HCT116 (cell line): ENCODE measurements at regions of chr12 and their contacts with region 1.

Region 1: GRCh38 chr12:123149501-123150274 is 1.2 kb downstream of the PITPNM2 start:
- DNase-seq: no peak
- ATAC-seq: no peak
- H3K4me3 ChIP-seq: peak overlapping the region; percentile 64 to 72
- H3K27ac ChIP-seq: peak overlapping the region; percentile 66; the same call in 1 of the 2 replicates
- H3K4me1 ChIP-seq: peaks cover 8 to 25% of the 10 kb centered on the region in 2 experiments; a peak in 3 of 4 replicates
- H3K27me3 ChIP-seq: no peaks in the 10 kb centered on the region
- CTCF ChIP-seq: no peak
- POLR2A ChIP-seq: no peak
- RAD21 ChIP-seq: no peak

Region 2: DNA sequence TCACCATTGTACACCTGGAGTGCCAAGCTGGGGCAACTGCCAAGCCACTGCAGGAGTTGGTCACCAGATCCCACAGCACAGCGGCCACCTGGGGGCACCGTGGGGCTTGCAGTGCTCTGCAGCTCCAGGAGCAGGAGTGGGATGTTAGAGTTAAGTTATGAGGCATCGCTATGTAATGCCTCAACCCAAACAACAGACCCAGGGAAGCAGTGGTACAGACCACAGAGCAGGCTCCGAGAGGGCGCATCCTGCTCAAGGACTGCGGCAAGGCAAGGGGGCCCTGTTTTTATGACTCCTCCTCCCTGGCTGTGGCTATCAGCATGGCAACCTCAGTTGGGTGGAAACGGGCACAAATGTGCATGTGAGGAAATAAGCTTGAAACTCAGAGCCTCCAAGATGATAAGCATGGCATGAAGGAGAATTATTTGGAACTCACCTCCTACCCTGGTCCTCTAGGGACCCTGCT is 106.1 kb before region 1 on chr12:
- CTCF ChIA-PET with region 1: no interaction called
- POLR2A ChIA-PET with region 1: no interaction called
- RAD21 ChIA-PET with region 1: no interaction called
- intact Hi-C with region 1: loop called (anchors 5 kb)
- DNase-seq: peak; percentile 44
- ATAC-seq: peak; percentile 95
- H3K4me3 ChIP-seq: no peak overlapping the region
- H3K27ac ChIP-seq: no peak overlapping the region
- H3K4me1 ChIP-seq: peaks cover 0 to 10% of the 10 kb centered on the region in 2 experiments; a peak in 1 of 4 replicates
- H3K27me3 ChIP-seq: no peaks in the 10 kb centered on the region
- CTCF ChIP-seq: peak; percentile 62 to 70 (median 68); a peak in 5 of 6 replicates
- POLR2A ChIP-seq: no peak
- RAD21 ChIP-seq: peak; percentile 97